ENCODE measurements at regions of chr1 and their contacts with region 1.

Region 1: DNA sequence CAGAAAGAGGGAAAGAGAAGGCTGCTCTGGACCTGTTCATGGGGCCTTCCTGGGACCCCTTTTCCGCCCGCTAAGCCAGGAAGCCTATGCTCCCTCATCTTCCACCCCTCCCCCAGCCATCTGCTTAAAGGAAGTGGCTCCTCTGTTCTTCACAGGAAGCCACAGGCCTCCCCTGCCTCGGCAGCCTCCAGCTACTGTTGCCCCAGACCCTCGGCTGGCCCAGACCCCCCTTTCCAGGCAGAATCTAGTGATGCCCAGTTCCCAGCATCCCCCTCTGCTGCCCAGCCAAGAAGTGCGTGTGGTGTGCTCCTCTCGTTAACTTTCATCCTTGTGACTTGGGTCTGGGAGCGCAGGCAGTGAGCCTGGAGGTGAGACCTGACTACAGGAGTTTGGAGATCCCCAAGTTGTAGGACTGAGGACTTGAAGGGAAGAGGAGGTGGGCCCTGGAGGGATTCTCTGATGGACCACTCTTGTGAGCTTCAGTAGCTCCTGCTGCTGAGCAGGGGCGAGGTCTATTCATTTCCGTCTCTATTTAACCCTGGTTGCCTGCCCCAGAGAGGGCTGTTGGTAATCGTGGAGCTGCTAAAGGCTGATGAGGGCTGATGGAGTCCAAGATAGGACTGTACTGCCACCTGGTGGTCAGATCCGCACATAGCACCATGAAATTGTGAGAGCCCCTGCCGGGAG is 9.1 kb downstream of the IFI6 start:
- DNase-seq: peak; percentile 96
- H3K4me3 Mint-ChIP-seq: peak overlapping the region; percentile 66
- H3K27ac Mint-ChIP-seq: peak overlapping the region; percentile 99
- H3K4me1 Mint-ChIP-seq: peaks cover 44% of the 10 kb centered on the region
- H3K27me3 Mint-ChIP-seq: no peaks in the 10 kb centered on the region

Region 2: DNA sequence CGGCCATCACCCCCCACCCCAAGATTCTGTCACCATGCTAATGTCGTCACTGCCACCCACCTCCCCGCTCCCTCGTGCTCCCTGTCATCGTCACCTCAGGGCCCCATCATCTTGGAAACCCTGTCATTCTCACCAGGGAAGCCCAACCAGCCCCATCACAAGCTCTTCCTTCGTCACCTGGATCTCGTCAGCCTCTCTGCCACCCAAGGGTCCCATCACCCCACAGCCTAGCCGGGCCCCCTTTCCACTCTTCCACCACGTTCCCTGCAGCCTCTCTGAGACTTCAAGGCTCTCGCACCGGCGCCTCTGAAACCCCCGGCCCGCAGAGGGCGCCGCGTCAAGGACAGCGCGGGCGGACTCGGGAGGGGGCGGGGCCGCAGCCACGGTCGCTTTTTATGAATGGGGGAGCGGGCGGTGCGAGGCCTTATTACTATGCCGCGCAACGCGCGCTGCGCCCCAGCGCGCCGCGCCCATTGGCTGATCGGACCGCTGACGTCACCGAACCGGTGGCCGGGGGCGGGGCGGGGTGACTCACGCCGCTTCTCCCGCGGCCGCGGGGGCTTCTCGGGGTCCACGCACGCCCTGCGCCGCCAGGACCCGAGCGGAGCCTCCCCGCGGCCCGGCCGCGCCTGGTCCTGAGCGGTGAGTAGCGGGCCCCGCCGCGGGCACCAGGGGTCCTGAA is 270.6 kb before region 1 on chr1 and contains the start of gene GPR3:
- CTCF ChIA-PET with region 1: interaction called, 11 read pairs
- intact Hi-C with region 1: loop called (anchors 1 kb)
- DNase-seq: peak; percentile 95
- H3K4me3 Mint-ChIP-seq: peak within 1 kb of the TSS; percentile 95
- H3K27ac Mint-ChIP-seq: peak within 1 kb of the TSS; percentile 75
- H3K4me1 Mint-ChIP-seq: peaks cover 19% of the 10 kb centered on the region
- H3K27me3 Mint-ChIP-seq: no peaks in the 10 kb centered on the region
- total RNA-seq, gene GPR3: 0.64 to 0.74 TPM

Region 3: DNA sequence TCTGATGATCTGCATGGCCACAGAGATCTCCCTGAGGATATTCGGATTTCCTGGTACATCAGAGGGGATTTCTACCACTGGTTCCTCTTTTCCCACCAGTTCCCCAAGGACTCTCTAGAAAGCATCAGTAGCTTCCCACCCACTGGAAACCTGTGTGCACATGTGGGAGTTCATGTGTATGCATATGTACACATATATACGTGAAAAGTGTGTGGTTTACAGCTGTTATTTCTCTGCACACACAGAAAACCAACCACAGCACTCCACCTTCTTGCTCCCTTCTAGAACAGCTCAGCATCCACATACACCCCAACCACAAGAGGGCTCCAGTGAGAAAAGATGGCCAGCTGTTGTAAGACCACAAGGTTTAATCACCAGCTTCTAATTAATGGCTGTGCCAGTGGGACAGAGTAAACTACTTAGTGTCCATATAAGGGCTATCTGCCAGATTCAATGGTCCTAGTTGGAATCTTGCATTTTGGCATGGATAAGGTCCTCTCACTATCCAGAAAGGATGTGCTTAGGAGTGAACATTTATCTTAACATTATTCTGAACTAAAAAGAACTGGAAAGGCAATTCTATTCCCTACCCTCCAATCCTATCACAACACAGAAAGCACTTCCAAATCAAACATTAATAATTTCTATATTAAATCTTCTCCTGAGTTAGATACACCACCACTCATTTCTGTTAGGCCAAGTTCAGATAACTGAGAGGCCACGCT is 246.3 kb before region 1 on chr1:
- CTCF ChIA-PET with region 1: interaction called, 6 read pairs
- intact Hi-C with region 1: loop called (anchors 5 kb)
- DNase-seq: peak; percentile 72
- H3K4me3 Mint-ChIP-seq: no peak overlapping the region
- H3K27ac Mint-ChIP-seq: no peak overlapping the region
- H3K4me1 Mint-ChIP-seq: peaks cover 38% of the 10 kb centered on the region
- H3K27me3 Mint-ChIP-seq: no peaks in the 10 kb centered on the region

Region 4: GRCh38 chr1:27556781-27557595 is 105.9 kb before region 1 on chr1:
- CTCF ChIA-PET with region 1: interaction called, 25 read pairs
- intact Hi-C with region 1: loop called (anchors 1 kb)
- DNase-seq: peak; percentile 86
- H3K4me3 Mint-ChIP-seq: no peak overlapping the region
- H3K27ac Mint-ChIP-seq: peak overlapping the region; percentile 6
- H3K4me1 Mint-ChIP-seq: peaks cover 21% of the 10 kb centered on the region
- H3K27me3 Mint-ChIP-seq: no peaks in the 10 kb centered on the region

Region 5: DNA sequence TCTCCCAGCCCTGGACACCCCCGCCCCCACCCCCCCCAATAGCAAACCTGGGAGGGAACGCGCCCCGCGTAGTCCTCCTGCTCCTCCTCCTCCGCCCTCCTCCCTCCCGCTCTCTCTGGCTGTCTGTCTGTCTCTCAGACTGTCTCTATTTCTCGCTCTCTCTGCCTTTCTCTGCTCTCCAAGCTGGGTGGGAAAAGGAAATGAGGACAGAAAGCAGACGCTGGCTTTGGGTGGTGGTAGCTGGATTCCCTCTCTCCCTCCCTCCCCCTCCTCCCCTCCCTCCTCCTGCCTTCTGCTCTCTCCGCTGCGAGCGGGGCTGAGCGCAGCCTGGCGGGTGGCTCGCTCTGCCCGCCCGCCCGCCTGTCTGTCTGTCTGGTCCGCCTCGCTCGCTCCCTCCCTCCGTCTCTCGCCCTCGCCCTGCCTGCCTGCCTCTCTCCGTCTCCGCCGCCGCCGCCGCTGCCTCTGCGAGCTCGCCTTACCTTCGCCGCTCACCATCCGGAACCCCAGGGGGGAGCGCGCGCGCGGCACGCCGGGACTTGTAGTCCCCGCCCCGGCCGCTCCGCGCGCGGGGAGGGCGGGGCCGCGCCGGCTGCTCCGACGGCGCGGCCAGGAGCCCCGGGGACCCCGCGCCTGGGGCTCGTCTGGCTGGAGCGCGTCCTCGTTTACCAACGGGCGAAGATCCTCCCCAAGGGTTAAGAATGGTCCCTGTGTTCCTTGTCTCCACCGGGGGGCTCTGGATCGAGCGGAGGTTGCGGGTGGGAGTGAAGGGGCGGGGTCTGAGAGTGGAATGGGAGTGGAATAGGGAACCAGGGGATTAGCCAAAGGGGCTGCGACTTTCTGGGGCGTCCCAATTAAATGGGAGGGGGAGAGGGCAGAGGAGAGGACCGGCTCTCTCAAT is 58.9 kb before region 1 on chr1 and contains the start of gene AHDC1:
- CTCF ChIA-PET with region 1: interaction called, 263 read pairs
- intact Hi-C with region 1: loop called (anchors 1 kb)
- DNase-seq: peak; percentile 91
- H3K4me3 Mint-ChIP-seq: peak within 1 kb of the TSS; percentile 85
- H3K27ac Mint-ChIP-seq: peak within 1 kb of the TSS; percentile 57
- H3K4me1 Mint-ChIP-seq: peaks cover 39% of the 10 kb centered on the region
- H3K27me3 Mint-ChIP-seq: no peaks in the 10 kb centered on the region
- total RNA-seq, gene AHDC1: 7.7 to 10.1 TPM

Region 6: DNA sequence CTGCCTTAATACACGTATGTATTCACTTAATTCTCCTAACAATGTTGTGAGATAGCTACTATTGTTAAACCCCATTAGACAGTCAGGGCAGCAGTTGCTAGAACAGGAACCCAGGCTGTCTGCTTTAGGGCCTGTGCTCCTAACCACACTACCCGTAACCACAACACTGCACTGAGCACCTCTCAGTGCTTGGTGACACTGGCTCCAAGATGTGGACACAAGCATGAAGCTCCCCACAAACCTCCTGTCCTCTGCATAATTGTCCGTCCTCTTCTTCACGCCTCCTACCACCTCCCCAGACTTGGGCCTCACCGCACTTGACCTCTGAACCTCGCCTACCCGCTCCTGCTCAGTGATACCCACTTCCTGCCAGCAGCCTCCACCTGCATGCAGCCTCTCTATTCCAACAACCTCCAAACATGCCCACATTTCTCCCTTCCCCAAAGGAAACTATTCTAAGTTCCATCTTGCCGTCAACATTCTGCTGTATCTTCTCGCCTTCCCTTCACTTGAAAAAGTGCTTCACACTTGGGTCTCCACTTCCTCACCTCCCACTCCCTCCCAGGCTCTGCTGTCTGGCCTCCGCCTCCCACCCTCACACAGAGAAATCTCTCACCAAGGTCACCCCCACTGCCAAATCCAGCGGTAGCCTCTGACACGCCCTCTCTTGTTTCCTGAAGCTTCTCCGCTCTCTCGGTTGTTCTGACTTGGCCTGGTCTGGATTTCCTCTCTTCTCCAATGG is 44.3 kb before region 1 on chr1:
- CTCF ChIA-PET with region 1: interaction called, 15 read pairs
- intact Hi-C with region 1: no loop called
- DNase-seq: peak; percentile 51
- H3K4me3 Mint-ChIP-seq: no peak overlapping the region
- H3K27ac Mint-ChIP-seq: peak overlapping the region; percentile 48
- H3K4me1 Mint-ChIP-seq: peaks cover 50% of the 10 kb centered on the region
- H3K27me3 Mint-ChIP-seq: no peaks in the 10 kb centered on the region

Region 7: DNA sequence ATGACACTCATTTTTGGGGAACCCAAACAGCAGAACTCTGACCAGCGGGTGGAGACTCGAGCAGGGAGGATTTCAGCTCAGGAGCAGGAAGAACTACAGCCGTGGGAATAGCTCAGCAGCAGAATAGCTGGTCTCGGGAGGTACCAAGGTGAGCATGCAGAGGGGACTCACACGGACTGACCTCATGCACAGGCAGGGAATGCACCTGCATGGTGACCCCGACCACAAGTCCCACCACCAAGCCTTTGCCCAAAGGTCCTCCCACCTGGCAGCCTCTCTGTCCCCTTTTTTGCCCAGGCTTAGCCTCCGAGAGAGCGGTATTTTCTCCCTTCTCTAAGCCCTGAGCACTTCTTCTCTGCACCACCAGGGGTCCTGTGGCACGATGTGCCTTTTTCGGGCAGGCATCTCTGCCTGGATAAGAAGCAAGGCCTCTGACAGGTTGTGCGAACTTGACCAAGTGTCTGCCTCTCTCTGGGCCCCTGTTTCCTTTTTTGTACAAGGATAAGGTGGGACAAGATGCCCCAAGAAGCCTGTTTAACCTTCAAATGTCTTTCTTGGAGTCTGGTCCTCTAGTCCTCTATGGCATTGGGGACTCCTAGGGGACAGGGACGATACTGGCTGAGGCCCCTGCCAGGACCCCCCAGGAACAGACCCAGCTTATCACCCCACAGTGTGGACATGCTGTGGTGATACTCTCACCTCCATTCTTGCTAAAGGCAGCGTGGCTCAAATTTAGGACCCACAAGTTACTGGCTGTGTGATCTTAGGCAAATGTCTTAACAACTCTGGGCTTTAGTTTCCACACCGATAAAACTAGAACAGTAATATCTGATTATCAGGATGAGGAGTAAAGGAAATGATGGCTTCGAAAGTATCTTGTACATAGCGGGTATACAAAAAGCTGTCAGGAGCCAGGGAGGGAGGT is 18.9 kb before region 1 on chr1:
- CTCF ChIA-PET with region 1: interaction called, 31 read pairs
- intact Hi-C with region 1: loop called (anchors 1 kb)
- DNase-seq: peak; percentile 81
- H3K4me3 Mint-ChIP-seq: no peak overlapping the region
- H3K27ac Mint-ChIP-seq: no peak overlapping the region
- H3K4me1 Mint-ChIP-seq: peaks cover 12% of the 10 kb centered on the region
- H3K27me3 Mint-ChIP-seq: no peaks in the 10 kb centered on the region

Region 8: DNA sequence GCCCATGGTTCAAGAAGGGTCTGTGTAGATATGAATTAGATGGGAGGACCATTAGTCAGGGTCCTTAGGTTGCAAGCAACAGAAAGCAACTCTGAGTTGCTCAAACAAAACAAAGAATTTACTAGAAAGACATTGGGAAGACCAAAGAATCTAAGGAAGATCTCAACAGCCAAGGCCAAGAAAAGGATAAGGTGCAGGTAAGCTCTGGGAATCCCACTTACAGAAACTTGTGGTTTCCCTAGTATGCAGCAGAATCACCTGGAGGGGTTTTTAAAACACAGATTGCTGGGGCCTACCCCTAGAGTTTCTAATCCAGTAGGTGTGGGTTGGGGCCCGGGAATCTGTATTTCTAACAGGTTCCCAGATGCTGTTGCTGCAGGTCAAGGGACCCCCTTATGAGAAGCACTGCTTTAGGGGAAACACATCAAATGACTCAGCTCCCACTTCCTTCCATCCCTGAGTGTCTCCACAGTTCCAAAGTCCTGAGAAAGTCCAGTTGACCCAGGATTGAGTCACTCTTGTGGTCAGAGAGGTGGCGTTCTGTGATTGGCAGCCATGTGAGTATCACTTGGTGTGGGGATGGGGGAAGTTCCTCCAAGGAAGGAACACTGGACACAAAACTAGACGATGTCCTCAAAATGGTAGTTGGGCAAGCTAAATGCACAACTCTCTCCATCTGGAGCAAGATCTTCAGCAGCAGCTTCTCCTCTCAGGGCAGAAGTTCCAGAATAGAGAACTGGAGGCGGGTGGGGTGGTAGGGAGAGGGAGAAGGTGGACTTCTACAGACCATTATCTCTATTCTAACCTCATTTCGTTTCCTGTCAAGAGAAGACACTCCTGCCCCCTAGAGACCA is 449.8 kb after region 1 on chr1:
- CTCF ChIA-PET with region 1: no interaction called
- intact Hi-C with region 1: no loop called
- DNase-seq: peak; percentile 25
- H3K4me3 Mint-ChIP-seq: no peak overlapping the region
- H3K27ac Mint-ChIP-seq: no peak overlapping the region
- H3K4me1 Mint-ChIP-seq: peaks cover 13% of the 10 kb centered on the region
- H3K27me3 Mint-ChIP-seq: no peaks in the 10 kb centered on the region

Measured in activated naive CD4-positive, alpha-beta T cell treated with anti-CD3 and anti-CD28 coated beads for 36 hours (primary cell).